Mammary epithelial cell (primary cell): ENCODE measurements at regions of chr3 and their contacts with region 1.

Region 1: GRCh38 chr3:32126305-32127015 is 20.0 kb downstream of the GPD1L start:
- DNase-seq: no peak
- H3K4me3 ChIP-seq: no peak overlapping the region
- H3K27ac ChIP-seq: no peak overlapping the region
- H3K4me1 ChIP-seq: no peaks in the 10 kb centered on the region
- H3K27me3 ChIP-seq: no peaks in the 10 kb centered on the region
- CTCF ChIP-seq: no peak

Region 2: GRCh38 chr3:32049916-32050315 is 76.5 kb before region 1 on chr3:
- CTCF ChIA-PET with region 1: no interaction called
- dilution Hi-C with region 1: loop called (anchors 5 kb)
- in situ Hi-C with region 1: no loop called
- intact Hi-C with region 1: no loop called
- DNase-seq: no peak
- H3K4me3 ChIP-seq: no peak overlapping the region
- H3K27ac ChIP-seq: no peak overlapping the region
- H3K4me1 ChIP-seq: no peaks in the 10 kb centered on the region
- H3K27me3 ChIP-seq: peaks cover 3% of the 10 kb centered on the region
- CTCF ChIP-seq: no peak